CD4-positive, alpha-beta memory T cell (primary cell): ENCODE measurements at regions of chr13 and their contacts with region 1.

Region 1: DNA sequence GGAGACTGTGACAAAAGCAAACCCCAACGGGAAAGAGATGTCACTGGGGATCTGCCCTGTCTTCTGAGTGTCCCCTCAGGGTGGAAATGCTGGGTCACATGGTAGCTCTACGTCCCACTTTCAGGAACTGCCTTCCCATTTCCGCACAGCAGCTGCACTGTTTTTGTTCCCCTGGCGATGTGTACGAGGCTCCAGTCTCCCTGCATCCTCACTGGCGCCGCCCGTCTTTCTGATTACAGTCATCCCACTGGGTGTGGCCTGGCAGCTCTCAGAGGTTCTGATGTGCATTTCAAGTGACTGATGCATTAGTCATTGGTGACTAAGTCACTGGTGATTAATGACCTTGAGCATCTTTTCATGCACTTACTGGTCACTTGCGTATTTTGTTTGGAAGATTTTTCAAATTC is 21.2 kb downstream of the PCID2 start:
- DNase-seq: peak in 1 of 5 donors; percentile 63
- H3K4me3 ChIP-seq: no peak overlapping the region
- H3K4me3 Mint-ChIP-seq: peak overlapping the region in 7 of 8 donors; percentile 52 to 83 (median 59)
- H3K27ac ChIP-seq: peak overlapping the region; percentile 16
- H3K27ac Mint-ChIP-seq: peak overlapping the region in 6 of 7 donors; percentile 46 to 91 (median 86)
- H3K4me1 ChIP-seq: peaks cover 43% of the 10 kb centered on the region
- H3K4me1 Mint-ChIP-seq: peaks cover 29 to 54% (median 39%) of the 10 kb centered on the region in 4 donors
- H3K27me3 ChIP-seq: no peaks in the 10 kb centered on the region
- H3K27me3 Mint-ChIP-seq: no peaks in the 10 kb centered on the region

Region 2: DNA sequence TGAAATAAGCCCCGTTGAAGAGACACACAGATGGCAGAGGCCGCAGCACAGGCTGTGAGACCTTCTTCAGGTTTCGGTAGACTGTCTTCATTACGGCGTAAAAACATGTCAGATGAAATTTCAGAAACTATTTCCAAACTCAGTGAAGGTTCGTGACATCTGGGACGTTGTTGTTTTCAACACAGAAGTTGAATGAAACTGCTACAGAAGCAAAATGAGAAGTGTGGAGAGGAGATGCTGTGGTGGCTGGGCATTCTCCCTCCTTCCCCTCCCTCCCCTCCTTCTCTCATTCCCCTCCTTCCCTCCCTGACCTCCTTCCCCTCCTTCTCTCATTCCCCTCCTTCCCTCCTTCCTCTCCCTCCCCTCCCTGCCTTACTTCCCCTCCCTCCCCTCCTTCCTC is 383.8 kb before region 1 on chr13:
- CTCF ChIA-PET with region 1: no interaction called
- POLR2A ChIA-PET with region 1: no interaction called
- intact Hi-C with region 1: no loop called
- DNase-seq: no peak
- H3K4me3 ChIP-seq: no peak overlapping the region
- H3K4me3 Mint-ChIP-seq: no peak overlapping the region
- H3K27ac ChIP-seq: no peak overlapping the region
- H3K27ac Mint-ChIP-seq: no peak overlapping the region
- H3K4me1 ChIP-seq: no peaks in the 10 kb centered on the region
- H3K4me1 Mint-ChIP-seq: peaks cover 0 to 3% (median under 1%) of the 10 kb centered on the region in 4 donors
- H3K27me3 ChIP-seq: no peaks in the 10 kb centered on the region
- H3K27me3 Mint-ChIP-seq: no peaks in the 10 kb centered on the region

Region 3: GRCh38 chr13:113153810-113154748 is 33.2 kb before region 1 on chr13:
- CTCF ChIA-PET with region 1: no interaction called
- POLR2A ChIA-PET with region 1: interaction called, 8 read pairs
- intact Hi-C with region 1: loop called (anchors 2 kb)
- DNase-seq: peak; percentile 57 to 76 (median 75)
- H3K4me3 ChIP-seq: peak overlapping the region; percentile 73 to 93
- H3K4me3 Mint-ChIP-seq: peak overlapping the region; percentile 83 to 89 (median 86)
- H3K27ac ChIP-seq: peak overlapping the region; percentile 49
- H3K27ac Mint-ChIP-seq: peak overlapping the region; percentile 87 to 98 (median 96)
- H3K4me1 ChIP-seq: peaks cover 23% of the 10 kb centered on the region
- H3K4me1 Mint-ChIP-seq: peaks cover 7 to 26% (median 20%) of the 10 kb centered on the region in 4 donors
- H3K27me3 ChIP-seq: no peaks in the 10 kb centered on the region
- H3K27me3 Mint-ChIP-seq: no peaks in the 10 kb centered on the region

Region 4: DNA sequence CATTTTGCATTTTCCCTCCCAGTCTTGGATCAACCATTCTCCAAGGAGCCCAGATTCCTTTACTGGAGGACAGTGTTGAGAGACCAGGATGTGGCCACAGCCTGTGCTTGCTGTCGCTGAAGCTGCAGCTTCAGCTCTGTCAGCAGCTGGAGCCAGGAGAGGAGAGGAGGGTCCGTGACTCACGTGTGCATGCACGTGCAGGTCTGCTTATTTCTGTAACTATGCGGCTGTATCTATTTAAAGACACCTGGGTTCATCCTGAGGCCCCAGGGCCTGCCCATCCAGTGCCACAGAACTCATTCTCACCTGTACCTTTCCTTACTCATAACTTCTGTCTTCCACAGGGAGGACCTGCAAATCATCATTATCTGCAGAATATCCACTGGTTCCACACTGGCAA is 101.6 kb after region 1 on chr13:
- CTCF ChIA-PET with region 1: no interaction called
- POLR2A ChIA-PET with region 1: no interaction called
- intact Hi-C with region 1: no loop called
- DNase-seq: no peak
- H3K4me3 ChIP-seq: no peak overlapping the region
- H3K4me3 Mint-ChIP-seq: no peak overlapping the region
- H3K27ac ChIP-seq: no peak overlapping the region
- H3K27ac Mint-ChIP-seq: no peak overlapping the region
- H3K4me1 ChIP-seq: peaks cover 14% of the 10 kb centered on the region
- H3K4me1 Mint-ChIP-seq: peaks cover 11 to 16% (median 13%) of the 10 kb centered on the region in 4 donors
- H3K27me3 ChIP-seq: peaks cover 6% of the 10 kb centered on the region
- H3K27me3 Mint-ChIP-seq: peaks cover 12 to 25% of the 10 kb centered on the region in 2 donors

Region 5: DNA sequence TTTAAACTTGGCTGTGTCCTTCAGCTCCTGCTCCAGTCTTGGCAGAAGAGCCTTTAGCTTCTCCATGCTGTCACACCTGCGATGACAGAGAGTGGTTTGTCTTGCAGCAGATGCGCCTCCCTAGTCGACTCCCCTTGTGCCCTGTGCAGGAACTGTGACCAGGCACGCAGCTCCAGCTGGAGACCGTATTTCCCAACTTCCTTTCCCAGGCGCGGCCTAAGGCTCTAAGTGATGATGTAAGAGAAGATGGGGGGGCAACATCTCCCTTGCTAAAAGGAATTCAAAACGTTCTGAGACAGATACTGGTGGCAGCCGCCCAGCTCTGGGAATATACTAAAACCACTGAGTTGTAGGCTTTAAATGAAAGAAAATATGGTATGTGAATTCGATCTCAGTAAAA is 286.9 kb after region 1 on chr13:
- CTCF ChIA-PET with region 1: no interaction called
- POLR2A ChIA-PET with region 1: no interaction called
- intact Hi-C with region 1: no loop called
- DNase-seq: no peak
- H3K4me3 ChIP-seq: no peak overlapping the region
- H3K4me3 Mint-ChIP-seq: no peak overlapping the region
- H3K27ac ChIP-seq: no peak overlapping the region
- H3K27ac Mint-ChIP-seq: no peak overlapping the region
- H3K4me1 ChIP-seq: no peaks in the 10 kb centered on the region
- H3K4me1 Mint-ChIP-seq: peaks cover 0 to 8% (median 0%) of the 10 kb centered on the region in 4 donors
- H3K27me3 ChIP-seq: no peaks in the 10 kb centered on the region
- H3K27me3 Mint-ChIP-seq: no peaks in the 10 kb centered on the region